Mammary epithelial cell (primary cell): ENCODE measurements at regions of chr10 and their contacts with region 1.

Region 1: GRCh38 chr10:114486938-114487814 is 82.9 kb upstream of the AFAP1L2 start:
- DNase-seq: peak; percentile 84
- H3K4me3 ChIP-seq: no peak overlapping the region
- H3K27ac ChIP-seq: peak overlapping the region; percentile 90
- H3K4me1 ChIP-seq: peaks cover 39% of the 10 kb centered on the region
- H3K27me3 ChIP-seq: no peaks in the 10 kb centered on the region
- CTCF ChIP-seq: peak; percentile 9 to 24

Region 2: DNA sequence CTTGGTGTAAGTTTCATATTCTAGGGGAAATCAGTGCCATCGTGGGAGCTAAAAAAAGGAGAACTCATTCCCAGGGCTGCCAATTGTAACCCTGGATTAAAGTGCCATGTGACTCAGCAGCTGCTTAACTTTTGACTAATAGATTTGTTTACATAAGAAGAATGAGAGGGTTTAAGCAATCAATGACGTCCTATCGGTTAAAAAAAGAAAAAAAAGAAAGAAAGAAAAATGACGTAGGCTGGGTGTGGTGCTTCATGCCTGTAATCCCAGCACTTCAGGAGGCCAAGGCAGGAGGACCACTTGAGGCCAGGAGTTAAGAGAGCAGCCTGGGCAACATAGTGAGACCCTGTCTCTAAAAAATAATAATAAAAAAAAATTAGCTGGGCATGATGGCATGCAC is 33.3 kb after region 1 on chr10:
- CTCF ChIA-PET with region 1: no interaction called
- dilution Hi-C with region 1: no loop called
- in situ Hi-C with region 1: no loop called
- intact Hi-C with region 1: loop called (anchors 1 kb)
- DNase-seq: peak; percentile 95
- H3K4me3 ChIP-seq: no peak overlapping the region
- H3K27ac ChIP-seq: peak overlapping the region; percentile 94
- H3K4me1 ChIP-seq: peaks cover 32% of the 10 kb centered on the region
- H3K27me3 ChIP-seq: no peaks in the 10 kb centered on the region
- CTCF ChIP-seq: no peak

Region 3: DNA sequence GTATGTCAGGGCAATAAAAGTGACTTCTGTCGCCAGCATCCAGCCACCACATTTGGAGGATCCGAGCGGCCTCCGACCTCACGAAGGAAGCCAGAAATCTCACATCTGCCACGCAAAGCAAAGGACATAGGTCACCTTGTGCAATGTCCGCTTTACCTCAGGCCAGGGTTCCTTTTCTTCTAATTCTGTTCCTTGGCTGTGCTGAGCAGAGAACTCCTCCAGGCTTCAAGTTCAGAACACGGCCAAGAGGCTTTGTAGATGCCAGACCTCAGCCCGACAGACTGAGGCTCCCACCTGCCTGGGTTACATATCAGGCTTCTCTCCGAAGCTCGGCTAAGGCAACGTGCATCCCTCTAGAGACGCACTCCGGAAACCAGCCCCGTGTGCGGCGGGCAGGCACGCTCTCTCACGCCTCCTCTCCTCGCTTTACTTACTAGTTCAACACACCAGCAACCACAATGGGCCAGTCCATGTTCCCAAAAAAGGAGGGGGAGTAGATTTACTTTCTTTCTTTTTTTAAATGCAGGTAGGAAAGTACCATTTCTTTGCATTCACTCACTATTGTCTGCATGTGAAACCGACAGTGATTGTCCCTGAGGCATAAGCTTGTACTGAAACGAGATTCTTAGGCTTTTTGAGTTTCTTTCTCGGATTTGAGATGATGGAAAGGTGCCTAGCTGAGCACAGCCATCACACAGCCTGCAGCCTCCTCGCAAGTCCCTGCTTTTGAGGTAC is 39.5 kb after region 1 on chr10:
- CTCF ChIA-PET with region 1: no interaction called
- dilution Hi-C with region 1: no loop called
- in situ Hi-C with region 1: no loop called
- intact Hi-C with region 1: loop called (anchors 1 kb)
- DNase-seq: peak; percentile 91
- H3K4me3 ChIP-seq: peak overlapping the region; percentile 61 to 88 (median 64)
- H3K27ac ChIP-seq: peak overlapping the region; percentile 96
- H3K4me1 ChIP-seq: peaks cover 15% of the 10 kb centered on the region
- H3K27me3 ChIP-seq: no peaks in the 10 kb centered on the region
- CTCF ChIP-seq: no peak

Region 4: GRCh38 chr10:114541081-114541796 is 54.1 kb after region 1 on chr10:
- CTCF ChIA-PET with region 1: no interaction called
- dilution Hi-C with region 1: loop called (anchors 5 kb)
- in situ Hi-C with region 1: no loop called
- intact Hi-C with region 1: no loop called
- DNase-seq: peak; percentile 89
- H3K4me3 ChIP-seq: no peak overlapping the region
- H3K27ac ChIP-seq: peak overlapping the region; percentile 47
- H3K4me1 ChIP-seq: peaks cover 41% of the 10 kb centered on the region
- H3K27me3 ChIP-seq: no peaks in the 10 kb centered on the region
- CTCF ChIP-seq: no peak